ENCODE measurements at regions of chr18 and their contacts with region 1.

Region 1: DNA sequence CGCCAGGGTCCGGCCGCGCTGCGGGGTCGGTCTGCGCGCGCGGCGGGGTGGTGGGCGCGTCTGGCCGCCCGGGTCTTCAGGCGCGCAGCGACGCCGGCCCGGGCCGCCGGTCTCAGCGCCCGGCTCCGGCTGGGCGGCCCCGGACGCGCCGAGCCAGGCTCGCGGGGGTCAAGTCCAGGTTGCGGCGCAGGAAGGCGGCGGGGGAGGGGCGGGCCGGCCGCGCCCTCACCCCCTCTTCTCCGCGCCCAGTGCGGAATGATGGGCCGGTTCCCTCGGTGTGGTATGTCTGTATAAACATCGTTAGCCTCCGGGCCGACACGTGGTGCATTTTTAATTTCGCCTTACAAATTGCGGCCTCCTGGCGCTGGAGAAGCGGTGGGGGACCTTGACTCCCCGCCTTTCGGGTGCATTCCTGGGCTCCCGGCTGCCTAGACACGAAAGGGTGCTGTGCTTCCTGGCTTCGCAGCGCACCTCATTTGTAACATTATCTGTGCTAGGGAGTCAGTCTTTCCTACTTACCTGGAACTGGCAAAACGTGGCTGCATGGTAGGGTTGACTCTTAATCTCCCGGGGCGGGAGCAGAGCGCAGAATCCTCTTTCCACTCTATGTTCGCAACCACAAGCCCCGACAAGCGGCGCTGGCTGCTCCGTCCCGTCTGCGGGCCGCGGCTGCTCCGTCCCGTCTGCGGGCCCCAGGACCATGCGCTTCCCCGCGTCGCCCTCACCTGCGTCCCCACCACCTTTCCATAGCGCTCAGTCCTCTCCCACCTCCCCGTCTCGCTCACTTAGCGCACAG is 69.0 kb downstream of the CTAGE1 start:
- DNase-seq: peak; percentile 87
- ATAC-seq: peak; percentile 73 to 79

Region 2: DNA sequence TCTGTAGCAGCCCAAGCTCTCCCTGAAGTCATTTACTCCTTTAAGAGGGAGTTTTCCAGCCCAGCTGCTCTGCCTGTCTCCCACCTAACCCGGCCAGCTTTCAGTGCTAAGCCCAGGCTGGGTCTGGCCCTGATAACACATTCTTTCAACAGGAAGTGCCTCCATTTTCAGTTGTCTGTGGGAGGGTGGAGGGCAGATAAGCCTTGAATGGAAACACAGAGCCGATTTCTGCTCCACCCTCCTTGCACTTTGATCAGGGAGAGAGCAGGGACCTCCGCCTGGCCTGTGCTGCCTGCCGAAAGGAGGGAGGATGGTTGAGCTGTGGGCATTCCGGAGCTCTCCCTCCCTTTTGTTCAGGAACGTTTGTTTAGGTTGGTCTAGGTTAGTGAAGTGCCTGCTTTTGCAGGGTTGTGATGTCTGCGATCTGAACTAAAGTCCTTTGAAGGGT is 154.5 kb before region 1 on chr18:
- intact Hi-C with region 1: loop called in 1 of 2 experiments (anchors 5 kb)
- DNase-seq: peak; percentile 74
- ATAC-seq: peak; percentile 64 to 72

Region 3: DNA sequence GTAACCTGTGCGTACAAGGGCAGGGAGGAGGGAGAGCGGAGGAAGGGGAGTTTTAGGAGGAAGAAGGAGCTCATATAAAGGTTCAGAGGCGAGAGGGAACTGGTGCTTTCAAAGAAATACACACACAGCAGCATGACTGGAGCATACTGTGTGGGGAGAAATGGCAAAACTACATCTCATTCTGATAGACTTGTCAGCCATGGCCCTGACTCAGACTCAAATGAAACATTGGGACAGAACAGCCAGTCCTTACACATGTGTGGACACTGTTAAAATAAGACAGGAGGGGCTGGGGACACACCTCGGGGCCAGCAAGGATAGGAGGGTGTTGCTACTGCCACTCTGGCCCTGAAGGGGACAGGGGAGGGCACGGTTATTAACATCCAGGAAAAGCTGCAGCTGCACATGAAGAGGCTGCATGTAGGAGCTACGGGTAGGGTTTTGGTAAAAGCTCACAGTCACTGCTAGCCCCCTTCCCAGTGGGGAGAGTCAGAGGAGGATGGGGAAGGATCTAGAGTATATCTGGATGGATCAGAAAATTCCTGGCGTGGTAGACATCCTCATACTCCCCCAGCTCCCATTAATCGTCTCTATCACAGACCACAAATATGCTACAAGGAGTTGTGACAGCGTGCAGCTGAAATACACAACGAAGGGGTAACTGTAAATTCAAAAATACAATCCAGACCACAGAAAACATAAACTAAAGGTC is 68.8 kb before region 1 on chr18:
- intact Hi-C with region 1: loop called (anchors 2 to 5 kb)
- DNase-seq: peak; percentile 35
- ATAC-seq: peak; percentile 6 to 9

Region 4: DNA sequence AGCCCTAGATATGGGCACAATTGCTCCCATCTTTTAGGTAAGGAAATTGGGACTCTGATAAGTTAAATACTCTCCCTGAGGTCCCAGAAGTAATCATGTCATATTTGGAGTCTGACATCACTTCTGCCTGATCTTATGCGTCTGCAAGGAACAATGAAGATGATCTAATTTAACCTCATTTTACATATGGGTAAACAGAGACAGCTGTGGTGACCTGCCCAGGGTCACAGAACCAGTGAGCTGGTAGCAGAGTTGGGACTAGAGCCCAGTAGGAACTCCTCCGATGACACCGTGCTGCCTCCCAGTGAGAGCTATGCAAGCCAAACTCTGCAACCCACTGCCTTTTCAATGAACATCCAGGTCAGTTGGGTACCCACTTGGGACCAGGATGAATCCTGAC is 51.2 kb after region 1 on chr18:
- intact Hi-C with region 1: no loop called
- DNase-seq: no peak
- ATAC-seq: peak; percentile 68

Measured in left cardiac atrium (tissue), 4 donors.